Uterus (tissue), 4 donors: ENCODE measurements at regions of chr7 and their contacts with region 1.

Region 1: GRCh38 chr7:55964261-55965099 is at the start of gene NIPSNAP2:
- DNase-seq: peak; percentile 43 to 71
- H3K4me3 ChIP-seq: peak within 1 kb of the TSS; percentile 43 to 51
- H3K27ac ChIP-seq: peak within 1 kb of the TSS; percentile 95 to 97
- H3K4me1 ChIP-seq: peaks cover 0 to 3% of the 10 kb centered on the region in 2 donors
- H3K27me3 ChIP-seq: no peaks in the 10 kb centered on the region
- CTCF ChIP-seq: peak in 3 of 4 experiments; percentile 68 to 97 (median 89)
- POLR2A ChIP-seq: peak in 1 of 2 donors; percentile 65
- total RNA-seq, gene NIPSNAP2: 51.8 to 80.6 (median 69.9) TPM

Region 2: GRCh38 chr7:55415173-55415778 is 549.2 kb before region 1 on chr7:
- intact Hi-C with region 1: no loop called
- DNase-seq: peak; percentile 71 to 85
- H3K4me3 ChIP-seq: no peak overlapping the region
- H3K27ac ChIP-seq: no peak overlapping the region
- H3K4me1 ChIP-seq: no peaks in the 10 kb centered on the region
- H3K27me3 ChIP-seq: no peaks in the 10 kb centered on the region
- CTCF ChIP-seq: peak; percentile 71 to 83 (median 78)
- POLR2A ChIP-seq: no peak

Region 3: GRCh38 chr7:55641273-55641691 is 323.2 kb before region 1 on chr7:
- intact Hi-C with region 1: loop called (anchors 5 kb)
- DNase-seq: peak; percentile 33 to 61
- H3K4me3 ChIP-seq: no peak overlapping the region
- H3K27ac ChIP-seq: no peak overlapping the region
- H3K4me1 ChIP-seq: no peaks in the 10 kb centered on the region
- H3K27me3 ChIP-seq: no peaks in the 10 kb centered on the region
- CTCF ChIP-seq: peak; percentile 74 to 94 (median 82)
- POLR2A ChIP-seq: no peak